ENCODE measurements at regions of chr4 and their contacts with region 1.

Region 1: GRCh38 chr4:77618383-77619122 is 12.9 kb downstream of the CXCL13 start:
- ATAC-seq: peak; percentile 84 to 99 (median 92)
- H3K4me3 ChIP-seq: no peak overlapping the region
- H3K27ac ChIP-seq: no peak overlapping the region
- H3K4me1 ChIP-seq: no peaks in the 10 kb centered on the region

Region 2: GRCh38 chr4:77465271-77465670 is 153.3 kb before region 1 on chr4:
- in situ Hi-C with region 1: loop called in 1 of 9 experiments (anchors 25 kb)
- ATAC-seq: peak in 3 of 8 experiments; percentile 88 to 94 (median 93)
- H3K4me3 ChIP-seq: no peak overlapping the region
- H3K27ac ChIP-seq: no peak overlapping the region
- H3K4me1 ChIP-seq: no peaks in the 10 kb centered on the region

Region 3: GRCh38 chr4:77795326-77795725 is 176.8 kb after region 1 on chr4:
- in situ Hi-C with region 1: no loop called
- ATAC-seq: peak in 1 of 8 experiments; percentile 71
- H3K4me3 ChIP-seq: no peak overlapping the region
- H3K27ac ChIP-seq: no peak overlapping the region
- H3K4me1 ChIP-seq: no peaks in the 10 kb centered on the region

Region 4: DNA sequence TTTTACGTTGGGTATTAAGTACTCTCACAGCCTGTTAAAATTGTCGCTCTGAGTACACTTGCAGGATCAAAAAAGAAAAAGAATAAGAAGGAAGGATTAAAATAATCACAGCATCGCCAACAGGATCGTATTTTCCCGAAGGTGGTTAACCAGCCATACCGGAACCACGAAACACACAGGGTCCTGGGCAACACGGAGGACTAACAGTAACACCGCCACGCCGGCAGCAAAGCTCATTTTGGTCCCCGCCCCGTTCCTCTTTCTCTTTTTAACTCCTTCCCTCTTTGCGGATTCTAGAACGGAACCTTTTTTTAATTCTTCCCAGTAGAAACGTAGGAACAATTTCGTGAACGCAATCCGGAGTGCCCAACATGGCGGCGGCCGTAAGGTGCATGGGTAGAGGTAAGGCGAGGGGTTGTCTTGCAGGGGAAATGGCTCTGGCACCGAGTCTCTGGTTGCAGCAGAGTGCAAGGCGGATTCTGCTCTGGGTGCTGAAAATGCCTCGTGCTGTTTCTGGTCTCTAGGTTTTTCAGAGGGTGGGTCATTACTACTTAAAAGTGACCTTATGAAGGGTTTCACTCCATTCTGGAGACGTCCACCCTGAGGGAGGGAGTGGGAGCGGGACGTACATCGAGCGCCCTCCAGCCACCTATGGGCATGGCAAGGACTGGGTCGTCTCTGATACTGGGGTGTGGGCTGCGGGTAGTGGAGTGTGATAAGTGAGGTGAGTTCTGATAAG is 244.1 kb after region 1 on chr4 and contains the start of gene MRPL1:
- in situ Hi-C with region 1: no loop called
- ATAC-seq: peak; percentile 76 to 96 (median 94)
- H3K4me3 ChIP-seq: peak within 1 kb of the TSS; percentile 62 to 74 (median 66)
- H3K27ac ChIP-seq: peak within 1 kb of the TSS; percentile 85 to 93
- H3K4me1 ChIP-seq: peaks cover 7 to 10% of the 10 kb centered on the region in 2 donors
- total RNA-seq, gene MRPL1: 31.9 to 44.3 (median 37.3) TPM

Measured in motor neuron (in vitro differentiated cells).